ENCODE measurements at regions of chr16 and their contacts with region 1.

Region 1: GRCh38 chr16:72400257-72400882 is 228.4 kb upstream of the PMFBP1 start:
- DNase-seq: peak in 5 of 14 experiments; percentile 0 to 50 (median 32)
- ATAC-seq: no peak
- H3K4me3 ChIP-seq: no peak overlapping the region
- H3K4me3 Mint-ChIP-seq: no peak overlapping the region
- H3K27ac ChIP-seq: no peak overlapping the region
- H3K27ac Mint-ChIP-seq: no peak overlapping the region
- H3K4me1 ChIP-seq: no peaks in the 10 kb centered on the region
- H3K4me1 Mint-ChIP-seq: no peaks in the 10 kb centered on the region
- H3K27me3 ChIP-seq: no peaks in the 10 kb centered on the region
- H3K27me3 Mint-ChIP-seq: no peaks in the 10 kb centered on the region
- CTCF ChIP-seq: peak; percentile 68

Region 2: GRCh38 chr16:72241930-72242329 is 158.4 kb before region 1 on chr16:
- CTCF ChIA-PET with region 1: no interaction called
- POLR2A ChIA-PET with region 1: no interaction called
- intact Hi-C with region 1: no loop called
- DNase-seq: peak in 2 of 14 experiments; percentile 2 to 6
- ATAC-seq: no peak
- H3K4me3 ChIP-seq: no peak overlapping the region
- H3K4me3 Mint-ChIP-seq: no peak overlapping the region
- H3K27ac ChIP-seq: no peak overlapping the region
- H3K27ac Mint-ChIP-seq: no peak overlapping the region
- H3K4me1 ChIP-seq: no peaks in the 10 kb centered on the region
- H3K4me1 Mint-ChIP-seq: peaks cover 8% of the 10 kb centered on the region
- H3K27me3 ChIP-seq: no peaks in the 10 kb centered on the region
- H3K27me3 Mint-ChIP-seq: no peaks in the 10 kb centered on the region
- CTCF ChIP-seq: no peak

Region 3: GRCh38 chr16:72474501-72475123 is 74.2 kb after region 1 on chr16:
- CTCF ChIA-PET with region 1: no interaction called
- POLR2A ChIA-PET with region 1: no interaction called
- intact Hi-C with region 1: no loop called
- DNase-seq: peak in 2 of 14 experiments; percentile 9 to 35
- ATAC-seq: no peak
- H3K4me3 ChIP-seq: no peak overlapping the region
- H3K4me3 Mint-ChIP-seq: no peak overlapping the region
- H3K27ac ChIP-seq: no peak overlapping the region
- H3K27ac Mint-ChIP-seq: no peak overlapping the region
- H3K4me1 ChIP-seq: no peaks in the 10 kb centered on the region
- H3K4me1 Mint-ChIP-seq: peaks cover 7% of the 10 kb centered on the region
- H3K27me3 ChIP-seq: no peaks in the 10 kb centered on the region
- H3K27me3 Mint-ChIP-seq: no peaks in the 10 kb centered on the region
- CTCF ChIP-seq: no peak

Region 4: GRCh38 chr16:72856797-72857196 is 456.4 kb after region 1 on chr16:
- CTCF ChIA-PET with region 1: no interaction called
- POLR2A ChIA-PET with region 1: no interaction called
- intact Hi-C with region 1: loop called in 1 of 2 experiments (anchors 10 kb)
- DNase-seq: no peak
- ATAC-seq: no peak
- H3K4me3 ChIP-seq: no peak overlapping the region
- H3K4me3 Mint-ChIP-seq: no peak overlapping the region
- H3K27ac ChIP-seq: no peak overlapping the region
- H3K27ac Mint-ChIP-seq: no peak overlapping the region
- H3K4me1 ChIP-seq: no peaks in the 10 kb centered on the region
- H3K4me1 Mint-ChIP-seq: no peaks in the 10 kb centered on the region
- H3K27me3 ChIP-seq: no peaks in the 10 kb centered on the region
- H3K27me3 Mint-ChIP-seq: peaks cover 4% of the 10 kb centered on the region
- CTCF ChIP-seq: no peak

Measured in CD4-positive, alpha-beta T cell (primary cell).